MCF 10A (cell line): ENCODE measurements at regions of chr11 and their contacts with region 1.

Region 1: DNA sequence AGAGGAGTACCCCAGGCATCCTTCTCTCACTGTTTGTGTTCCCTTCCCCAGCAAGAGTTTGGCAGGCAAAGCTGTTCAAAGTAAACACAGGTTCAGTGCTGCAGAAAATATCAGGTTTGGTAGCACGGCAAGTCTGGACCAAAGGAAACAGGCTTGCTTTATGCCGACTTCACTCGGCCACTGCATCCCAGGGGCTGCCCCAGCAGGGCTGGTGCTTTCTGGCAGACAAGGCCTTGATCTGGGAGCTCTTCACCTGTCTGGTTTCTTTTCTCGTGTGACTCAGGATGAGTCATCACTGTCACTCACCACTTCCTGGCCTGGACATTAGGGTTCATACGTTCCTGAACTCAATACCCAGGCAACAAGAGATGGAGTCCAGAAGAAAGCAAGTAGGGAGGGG is 52.6 kb upstream of the NAV2 start:
- DNase-seq: peak; percentile 94
- H3K4me3 Mint-ChIP-seq: no peak overlapping the region
- H3K27ac Mint-ChIP-seq: peak overlapping the region; percentile 73
- H3K4me1 Mint-ChIP-seq: peaks cover 18% of the 10 kb centered on the region
- H3K27me3 Mint-ChIP-seq: no peaks in the 10 kb centered on the region
- CTCF ChIP-seq: no peak

Region 2: GRCh38 chr11:19646921-19647320 is 13.2 kb before region 1 on chr11:
- CTCF ChIA-PET with region 1: interaction called, 13 read pairs
- POLR2A ChIA-PET with region 1: interaction called, 4 read pairs
- intact Hi-C with region 1: no loop called
- DNase-seq: peak; percentile 76
- H3K4me3 Mint-ChIP-seq: no peak overlapping the region
- H3K27ac Mint-ChIP-seq: no peak overlapping the region
- H3K4me1 Mint-ChIP-seq: peaks cover 10% of the 10 kb centered on the region
- H3K27me3 Mint-ChIP-seq: no peaks in the 10 kb centered on the region
- CTCF ChIP-seq: no peak

Region 3: DNA sequence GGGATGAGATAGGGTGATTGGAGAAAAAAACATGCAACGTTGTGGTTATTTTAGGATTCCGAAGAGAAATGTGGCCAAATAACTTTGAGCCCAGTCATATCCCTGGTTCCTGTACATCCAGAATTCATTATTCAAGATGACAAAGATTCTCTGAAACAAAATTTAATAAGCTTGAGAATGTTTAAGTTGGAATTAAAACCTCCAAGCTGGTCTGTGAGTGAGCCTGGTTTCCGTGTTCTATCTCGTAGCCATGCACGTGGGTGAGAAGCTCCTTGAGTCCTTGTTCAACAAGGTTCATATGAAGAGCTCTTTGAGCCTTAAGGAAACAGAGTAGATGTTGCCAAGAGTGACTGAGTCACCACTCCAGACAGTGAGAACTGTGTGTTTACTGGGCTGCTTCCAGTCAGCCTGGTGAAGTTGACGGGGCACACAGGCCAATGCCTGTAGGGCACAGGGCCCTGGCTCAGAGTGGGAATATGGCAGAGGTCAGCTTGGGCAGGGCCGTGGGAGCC is 259.0 kb after region 1 on chr11:
- CTCF ChIA-PET with region 1: no interaction called
- POLR2A ChIA-PET with region 1: no interaction called
- intact Hi-C with region 1: no loop called
- DNase-seq: peak; percentile 98
- H3K4me3 Mint-ChIP-seq: peak overlapping the region; percentile 63
- H3K27ac Mint-ChIP-seq: peak overlapping the region; percentile 94
- H3K4me1 Mint-ChIP-seq: peaks cover 32% of the 10 kb centered on the region
- H3K27me3 Mint-ChIP-seq: no peaks in the 10 kb centered on the region
- CTCF ChIP-seq: no peak